Activated naive CD4-positive, alpha-beta T cell treated with anti-CD3 and anti-CD28 coated beads for 36 hours (primary cell): ENCODE measurements at regions of chr9 and their contacts with region 1.

Region 1: GRCh38 chr9:105103782-105104181 is 140.7 kb upstream of the SLC44A1 start:
- DNase-seq: no peak
- H3K4me3 Mint-ChIP-seq: no peak overlapping the region
- H3K27ac Mint-ChIP-seq: no peak overlapping the region
- H3K4me1 Mint-ChIP-seq: peaks cover 3% of the 10 kb centered on the region
- H3K27me3 Mint-ChIP-seq: no peaks in the 10 kb centered on the region

Region 2: DNA sequence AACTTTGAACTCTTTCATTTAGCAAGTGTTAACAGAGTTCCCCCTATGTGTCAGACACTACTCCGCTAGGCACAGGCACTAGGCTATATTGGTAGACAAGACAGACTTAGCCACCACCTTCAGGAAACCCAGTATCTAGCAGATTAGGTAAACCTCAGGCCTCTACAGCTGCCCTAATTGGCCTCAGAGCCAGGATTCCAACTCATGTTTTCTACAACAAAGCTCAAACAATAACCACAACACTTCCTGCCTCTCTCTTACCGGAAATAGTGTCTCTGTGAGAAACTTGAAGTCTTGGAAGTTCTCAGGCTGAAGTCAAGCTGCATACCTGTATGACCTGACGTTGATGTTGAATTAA is 24.1 kb after region 1 on chr9:
- CTCF ChIA-PET with region 1: no interaction called
- intact Hi-C with region 1: loop called (anchors 2 kb)
- DNase-seq: peak; percentile 74
- H3K4me3 Mint-ChIP-seq: no peak overlapping the region
- H3K27ac Mint-ChIP-seq: peak overlapping the region; percentile 28
- H3K4me1 Mint-ChIP-seq: peaks cover 44% of the 10 kb centered on the region
- H3K27me3 Mint-ChIP-seq: no peaks in the 10 kb centered on the region

Region 3: DNA sequence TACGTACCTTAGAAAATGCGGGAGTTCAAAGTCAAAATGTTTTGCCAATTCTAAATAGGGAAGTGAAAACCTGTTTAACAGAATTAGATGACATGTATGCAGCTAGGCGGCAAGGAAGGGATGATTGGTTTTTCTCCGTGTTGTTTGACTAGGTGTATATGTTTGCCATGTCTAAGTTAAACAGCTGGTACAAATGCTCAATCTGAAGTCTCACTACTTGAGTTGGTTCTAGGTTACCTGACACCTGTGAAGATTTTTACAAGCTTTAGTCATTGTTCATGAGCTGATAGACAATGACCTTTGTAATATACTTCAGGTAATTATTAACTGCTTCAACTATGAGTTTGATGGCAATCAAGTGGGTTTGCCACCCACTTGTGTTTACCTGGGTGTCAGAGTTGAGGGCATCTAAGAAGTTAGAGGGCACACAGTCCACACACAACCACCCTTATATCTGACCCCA is 215.0 kb after region 1 on chr9:
- CTCF ChIA-PET with region 1: no interaction called
- intact Hi-C with region 1: no loop called
- DNase-seq: no peak
- H3K4me3 Mint-ChIP-seq: no peak overlapping the region
- H3K27ac Mint-ChIP-seq: no peak overlapping the region
- H3K4me1 Mint-ChIP-seq: no peaks in the 10 kb centered on the region
- H3K27me3 Mint-ChIP-seq: no peaks in the 10 kb centered on the region